Cardiac septum (tissue), 1 donor: ENCODE measurements at regions of chr2 and their contacts with region 1.

Region 1: GRCh38 chr2:219206442-219207253 is at the start of gene ZFAND2B:
- DNase-seq: peak; percentile 98
- total RNA-seq, gene ZFAND2B: 23.9 TPM

Region 2: GRCh38 chr2:218860950-218861381 is 345.7 kb before region 1 on chr2:
- intact Hi-C with region 1: no loop called
- DNase-seq: peak; percentile 73

Region 3: GRCh38 chr2:219160186-219161017 is 46.2 kb before region 1 on chr2 and contains the start of gene NHEJ1:
- intact Hi-C with region 1: loop called (anchors 1 kb)
- DNase-seq: peak; percentile 97
- total RNA-seq, gene NHEJ1: 6.7 TPM